HEK293 (cell line): ENCODE measurements at regions of chr12 and their contacts with region 1.

Region 1: GRCh38 chr12:69157023-69157655 is 82.2 kb upstream of the CPSF6 start:
- H3K4me3 ChIP-seq: no peak overlapping the region
- H3K27ac ChIP-seq: no peak overlapping the region
- H3K4me1 ChIP-seq: no peaks in the 10 kb centered on the region; the same call in 1 of the 2 replicates
- CTCF ChIP-seq: peak; percentile 87

Region 2: GRCh38 chr12:69044887-69045286 is 112.3 kb before region 1 on chr12:
- CTCF ChIA-PET with region 1: no interaction called
- POLR2A ChIA-PET with region 1: no interaction called
- H3K4me3 ChIP-seq: no peak overlapping the region
- H3K27ac ChIP-seq: no peak overlapping the region
- H3K4me1 ChIP-seq: no peaks in the 10 kb centered on the region
- CTCF ChIP-seq: no peak

Region 3: DNA sequence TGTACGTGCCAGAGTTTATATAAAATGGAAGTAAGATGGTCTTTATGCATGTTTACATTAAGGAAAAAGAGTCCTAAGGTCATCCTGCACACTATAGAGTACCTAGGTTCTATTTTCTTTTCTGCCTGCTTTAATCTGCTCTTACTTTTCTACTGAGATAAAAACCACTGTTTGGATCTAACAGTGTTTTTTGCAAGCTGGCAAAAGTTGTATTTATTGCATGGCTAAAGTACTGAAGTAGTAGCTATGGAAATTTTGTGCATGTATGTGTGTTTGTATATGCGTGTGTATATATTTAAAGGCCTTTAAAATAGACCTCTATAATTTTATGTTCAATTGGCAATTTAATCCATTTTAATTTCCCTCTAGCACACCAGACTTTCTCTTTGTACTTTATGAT is 16.1 kb before region 1 on chr12:
- CTCF ChIA-PET with region 1: interaction called, 12 read pairs
- POLR2A ChIA-PET with region 1: no interaction called
- H3K4me3 ChIP-seq: no peak overlapping the region
- H3K27ac ChIP-seq: no peak overlapping the region
- H3K4me1 ChIP-seq: no peaks in the 10 kb centered on the region
- CTCF ChIP-seq: no peak

Region 4: DNA sequence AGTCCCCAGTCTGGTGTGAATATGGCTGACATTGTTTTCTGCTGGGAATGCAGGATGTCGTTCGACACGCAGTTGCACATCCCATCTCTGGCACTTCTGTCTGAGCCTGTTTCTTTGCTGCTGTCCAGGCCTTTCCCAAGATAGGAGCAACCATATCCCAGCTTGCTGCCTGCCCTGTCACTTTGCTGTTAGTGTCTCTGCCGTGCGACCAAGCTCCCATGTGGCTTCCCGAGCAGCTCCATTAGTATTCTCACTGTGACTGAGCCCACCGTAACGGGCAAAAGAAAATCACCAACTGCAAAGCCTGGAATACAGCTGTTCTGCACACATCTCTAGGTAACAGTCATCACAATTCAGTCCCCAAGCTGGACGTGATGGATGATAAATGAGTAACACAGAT is 16.2 kb after region 1 on chr12:
- CTCF ChIA-PET with region 1: interaction called, 14 read pairs
- POLR2A ChIA-PET with region 1: no interaction called
- H3K4me3 ChIP-seq: no peak overlapping the region
- H3K27ac ChIP-seq: no peak overlapping the region
- H3K4me1 ChIP-seq: no peaks in the 10 kb centered on the region
- CTCF ChIP-seq: no peak

Region 5: DNA sequence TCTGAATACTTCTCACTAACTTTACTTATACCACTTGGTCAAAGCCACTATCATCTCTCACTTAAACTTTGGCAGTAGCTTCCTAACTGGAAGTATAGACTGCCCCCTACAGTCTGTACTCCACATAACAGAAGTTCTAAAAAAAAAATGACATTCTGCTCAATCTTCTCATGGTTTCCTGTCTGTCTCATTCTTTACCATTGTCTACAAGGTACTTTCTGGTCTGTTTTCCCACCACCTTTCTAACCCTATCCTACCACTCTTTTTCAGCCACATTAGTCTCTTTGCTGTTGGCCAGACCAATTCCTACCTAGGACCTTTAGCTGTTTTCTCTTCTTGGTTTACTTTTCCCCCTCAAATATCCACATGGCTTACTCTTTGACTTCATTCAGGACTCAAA is 96.9 kb after region 1 on chr12:
- CTCF ChIA-PET with region 1: interaction called, 17 read pairs
- POLR2A ChIA-PET with region 1: no interaction called
- H3K4me3 ChIP-seq: no peak overlapping the region
- H3K27ac ChIP-seq: no peak overlapping the region
- H3K4me1 ChIP-seq: peaks cover 11% of the 10 kb centered on the region
- CTCF ChIP-seq: 0 out of 2 replicates have a peak, but pooled peaks have one; percentile 16

Region 6: DNA sequence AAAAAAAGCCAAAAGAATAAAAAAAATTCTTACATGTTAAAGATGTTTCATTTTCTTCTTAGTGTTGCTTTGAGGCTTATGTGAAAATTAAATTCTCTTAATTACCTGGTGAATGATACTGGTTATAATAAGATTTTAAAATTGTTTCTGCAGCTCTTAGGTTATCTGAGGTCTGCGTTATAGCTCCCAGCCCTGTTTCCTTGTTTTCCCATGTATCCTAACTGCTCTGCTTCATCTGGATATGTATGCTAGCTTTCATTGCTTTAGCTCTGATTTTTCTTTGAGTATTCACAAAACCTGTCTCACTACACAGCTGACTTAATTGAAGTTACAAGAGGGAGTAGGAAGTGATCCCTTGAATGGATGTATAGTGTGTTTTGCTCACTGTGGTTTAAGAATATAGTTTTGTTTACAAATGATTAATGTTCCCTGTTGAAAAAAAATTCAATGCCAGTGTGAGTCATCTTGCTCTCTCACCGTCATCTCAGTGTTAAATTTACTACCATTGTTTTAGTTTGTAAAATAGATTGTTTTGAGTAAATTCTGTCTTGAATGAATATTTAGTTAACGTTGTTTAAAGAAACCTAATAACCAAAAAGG is 109.0 kb after region 1 on chr12:
- CTCF ChIA-PET with region 1: interaction called, 12 read pairs
- POLR2A ChIA-PET with region 1: no interaction called
- H3K4me3 ChIP-seq: no peak overlapping the region
- H3K27ac ChIP-seq: no peak overlapping the region
- H3K4me1 ChIP-seq: peaks cover 4% of the 10 kb centered on the region; the same call in 1 of the 2 replicates
- CTCF ChIP-seq: no peak

Region 7: DNA sequence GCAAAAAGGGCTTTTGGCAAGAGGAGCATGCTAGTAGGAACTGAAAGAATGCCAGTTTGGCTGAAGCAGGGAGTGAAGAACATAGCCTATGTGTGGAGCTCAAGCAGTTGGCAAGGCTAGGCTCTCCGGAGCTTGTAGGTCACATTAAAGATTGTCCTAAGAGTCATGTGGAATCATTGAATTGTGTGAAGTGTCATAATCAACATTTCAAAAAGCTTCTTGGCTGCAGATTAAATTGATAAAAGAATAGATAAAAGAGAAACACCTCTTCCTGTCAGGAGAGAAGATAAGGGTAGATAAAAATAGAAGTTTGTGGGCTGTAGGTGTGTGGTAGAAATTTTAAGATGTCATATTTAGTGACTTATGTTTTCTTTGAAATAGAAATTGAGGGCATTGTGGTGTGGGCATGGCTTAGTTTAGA is 118.3 kb after region 1 on chr12:
- CTCF ChIA-PET with region 1: interaction called, 13 read pairs
- POLR2A ChIA-PET with region 1: no interaction called
- H3K4me3 ChIP-seq: no peak overlapping the region
- H3K27ac ChIP-seq: no peak overlapping the region
- H3K4me1 ChIP-seq: peaks cover 3% of the 10 kb centered on the region; the same call in 1 of the 2 replicates
- CTCF ChIP-seq: no peak